Right lobe of liver (tissue), 6 donors: ENCODE measurements at regions of chr3 and their contacts with region 1.

Region 1: DNA sequence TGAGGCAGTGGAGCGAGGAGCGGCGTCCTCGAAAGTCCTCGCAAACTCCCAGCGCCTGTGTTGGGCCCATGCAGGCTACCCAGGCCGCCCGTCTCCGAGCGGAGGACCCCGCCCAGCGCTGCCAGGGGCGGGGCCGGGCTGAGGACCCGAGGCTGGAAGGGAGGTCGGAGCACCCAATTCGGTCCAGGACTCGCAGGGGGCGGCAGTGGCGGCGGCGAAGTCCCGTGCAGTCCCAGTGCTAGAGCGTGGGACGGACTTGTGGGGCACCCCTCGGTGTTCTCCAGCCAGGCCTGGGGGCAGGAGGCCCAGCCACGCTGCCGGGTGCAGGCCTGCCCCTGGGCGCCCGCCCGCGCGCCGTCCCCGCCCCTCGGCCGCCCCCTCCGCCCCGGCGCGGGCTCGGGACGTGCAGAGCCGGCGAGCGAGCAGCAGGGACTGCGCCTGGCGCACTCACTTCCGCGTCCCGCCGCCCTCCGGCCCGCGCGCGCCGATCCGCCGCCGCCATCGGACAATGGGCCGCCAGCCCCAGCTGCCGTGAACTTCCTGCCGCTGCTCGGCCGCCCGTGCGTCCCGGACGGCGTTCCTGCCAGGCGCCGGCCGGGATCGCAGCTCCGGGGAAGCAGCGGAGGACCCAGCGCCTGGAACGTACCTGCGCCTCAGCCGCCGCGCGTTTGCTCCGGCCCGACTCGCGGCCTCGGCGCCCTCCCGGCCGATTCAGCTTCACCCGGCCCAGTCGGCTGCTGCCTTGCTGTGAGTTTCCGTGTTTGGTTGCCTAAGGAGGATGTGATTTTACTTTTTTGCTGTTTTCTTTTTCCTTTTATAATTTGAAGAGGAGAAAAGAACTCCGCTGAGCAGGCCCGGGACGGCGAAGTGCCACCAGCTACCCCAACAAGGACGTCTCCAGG is 592 bp upstream of the LIMD1 start:
- DNase-seq: peak; percentile 85 to 86 (median 86)
- ATAC-seq: peak; percentile 69 to 83 (median 80)
- H3K4me3 ChIP-seq: peak overlapping the region; percentile 85 to 94 (median 88)
- H3K27ac ChIP-seq: peak overlapping the region; percentile 90 to 93 (median 90)
- H3K4me1 ChIP-seq: peaks cover 0 to 47% (median 17%) of the 10 kb centered on the region in 4 donors
- H3K27me3 ChIP-seq: no peaks in the 10 kb centered on the region
- CTCF ChIP-seq: no peak
- POLR2A ChIP-seq: peak; percentile 91

Region 2: DNA sequence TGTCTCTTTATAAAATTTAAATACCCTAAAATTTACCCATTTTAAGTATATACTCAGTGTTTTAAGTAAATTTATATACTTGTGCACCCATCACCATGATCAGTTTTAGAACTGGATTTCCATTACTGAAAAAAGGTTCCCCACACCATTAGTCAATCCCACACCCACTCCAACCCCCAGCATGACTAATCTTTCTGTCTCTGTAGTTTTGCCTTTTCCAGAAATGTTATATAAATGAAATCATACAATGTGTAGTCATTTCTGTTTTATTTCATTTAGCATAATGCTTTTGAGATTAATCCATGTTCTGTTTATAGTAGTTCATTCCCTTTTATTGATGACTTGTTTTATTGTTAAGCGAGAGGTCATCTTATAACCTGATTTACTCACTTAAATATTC is 65.5 kb before region 1 on chr3:
- intact Hi-C with region 1: loop called in 1 of 2 experiments (anchors 10 kb)
- DNase-seq: no peak
- ATAC-seq: no peak
- H3K4me3 ChIP-seq: no peak overlapping the region
- H3K27ac ChIP-seq: no peak overlapping the region
- H3K4me1 ChIP-seq: no peaks in the 10 kb centered on the region
- H3K27me3 ChIP-seq: no peaks in the 10 kb centered on the region
- CTCF ChIP-seq: no peak
- POLR2A ChIP-seq: no peak

Region 3: GRCh38 chr3:45656575-45657363 is 62.8 kb after region 1 on chr3:
- intact Hi-C with region 1: loop called (anchors 5 to 10 kb)
- DNase-seq: peak; percentile 91 to 94 (median 92)
- ATAC-seq: peak; percentile 83 to 93 (median 90)
- H3K4me3 ChIP-seq: no peak overlapping the region
- H3K27ac ChIP-seq: peak overlapping the region; percentile 10 to 63 (median 28)
- H3K4me1 ChIP-seq: peaks cover 0 to 41% (median 19%) of the 10 kb centered on the region in 4 donors
- H3K27me3 ChIP-seq: no peaks in the 10 kb centered on the region
- CTCF ChIP-seq: peak; percentile 94 to 98 (median 96)
- POLR2A ChIP-seq: no peak